Dendritic cell treated with granulocyte-macrophage colony-stimulating factor and Interleukin-4, amounts not matched to agents 40 ng/mL and 50 ng/mL, for 4 days (primary cell): ENCODE measurements at regions of chr10 and their contacts with region 1.

Region 1: DNA sequence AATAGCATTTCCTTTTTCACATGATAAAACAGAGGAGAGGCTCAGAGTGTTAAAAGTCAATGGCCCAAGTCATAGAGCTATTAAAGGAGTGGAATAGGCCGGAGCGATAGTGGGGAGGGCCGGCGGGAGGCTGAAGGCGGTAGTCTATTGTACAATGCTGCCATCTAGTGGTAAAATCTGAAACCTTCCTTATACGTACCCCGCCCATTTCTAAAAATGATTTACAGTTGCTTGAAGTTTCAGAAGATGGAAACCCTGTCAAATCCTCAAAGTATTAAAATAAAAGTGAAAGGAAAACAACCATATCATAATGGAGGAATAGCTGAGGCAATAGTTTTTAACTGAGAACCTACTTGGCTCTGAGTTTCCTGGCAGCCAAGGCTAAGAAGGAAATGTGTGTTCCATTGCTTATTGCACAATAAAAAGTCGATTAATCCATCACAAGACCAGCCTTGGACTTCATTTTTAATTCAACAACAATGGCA is 209.1 kb downstream of the CCSER2 start:
- H3K4me3 Mint-ChIP-seq: no peak overlapping the region
- H3K27ac Mint-ChIP-seq: no peak overlapping the region
- H3K4me1 Mint-ChIP-seq: peaks cover 15% of the 10 kb centered on the region
- H3K27me3 Mint-ChIP-seq: peaks cover 31% of the 10 kb centered on the region

Region 2: DNA sequence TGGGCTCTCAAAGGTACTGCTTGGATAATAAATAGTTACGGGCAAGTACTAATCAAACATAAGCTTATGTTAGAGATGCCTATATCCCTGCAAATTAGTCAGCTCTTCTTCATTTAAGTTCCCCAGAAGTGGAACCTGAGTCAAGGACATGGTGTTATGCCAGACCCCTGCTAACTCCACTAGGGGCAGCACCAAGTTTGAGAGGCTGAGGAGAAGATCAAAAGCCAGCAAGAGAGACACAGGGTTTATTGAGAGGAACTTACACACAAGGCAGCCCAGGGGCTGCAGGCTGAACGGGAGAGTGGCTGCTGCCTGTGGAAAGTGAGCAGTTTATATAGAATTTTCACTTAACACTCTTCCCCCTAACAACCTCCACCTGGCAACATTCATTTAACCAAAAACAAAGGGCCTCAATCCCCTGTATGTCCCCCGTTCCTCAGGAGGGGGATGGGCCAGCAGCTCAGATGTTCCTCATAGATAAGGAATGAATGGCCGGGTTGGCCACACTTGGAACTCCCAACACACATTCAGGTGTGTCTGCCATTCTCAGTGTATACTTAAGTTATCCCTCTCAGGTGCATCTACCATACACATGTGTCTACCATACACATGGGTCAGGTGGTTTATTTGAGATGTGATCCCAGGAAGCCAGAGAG is 460.8 kb before region 1 on chr10:
- intact Hi-C with region 1: no loop called
- H3K4me3 Mint-ChIP-seq: no peak overlapping the region
- H3K27ac Mint-ChIP-seq: no peak overlapping the region
- H3K4me1 Mint-ChIP-seq: no peaks in the 10 kb centered on the region
- H3K27me3 Mint-ChIP-seq: peaks cover under 1% of the 10 kb centered on the region

Region 3: DNA sequence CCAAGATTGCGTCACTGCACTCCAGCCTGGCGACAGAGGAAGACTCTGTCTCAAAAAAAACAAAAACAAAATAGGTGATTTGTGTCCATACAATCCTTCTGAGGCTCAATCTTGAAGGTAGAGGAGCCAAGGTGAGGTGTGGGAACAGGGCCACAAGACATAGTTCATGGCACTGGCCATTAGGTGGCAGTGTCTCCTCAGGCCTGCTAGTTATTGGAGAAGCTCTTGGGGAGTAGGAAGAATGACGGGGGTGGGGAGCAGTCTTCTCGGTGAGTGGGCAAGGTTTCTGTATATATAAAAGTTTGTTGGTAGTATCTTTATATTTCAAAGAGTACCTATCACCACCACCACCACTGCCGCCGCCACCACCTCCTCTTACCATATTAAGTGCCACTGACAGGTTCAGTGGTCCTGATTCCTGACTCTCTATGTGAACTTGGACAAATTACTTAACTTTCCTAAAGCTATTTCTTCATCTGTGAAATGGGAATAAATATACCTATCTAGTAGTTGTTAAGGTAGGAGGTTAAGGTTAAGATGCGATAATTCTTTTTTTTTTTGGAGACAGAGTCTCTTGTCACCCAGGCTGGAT is 185.1 kb before region 1 on chr10:
- intact Hi-C with region 1: loop called (anchors 2 kb)
- H3K4me3 Mint-ChIP-seq: no peak overlapping the region
- H3K27ac Mint-ChIP-seq: no peak overlapping the region
- H3K4me1 Mint-ChIP-seq: peaks cover 20% of the 10 kb centered on the region
- H3K27me3 Mint-ChIP-seq: no peaks in the 10 kb centered on the region

Region 4: GRCh38 chr10:84375011-84375410 is 162.5 kb before region 1 on chr10:
- intact Hi-C with region 1: loop called (anchors 1 kb)
- H3K4me3 Mint-ChIP-seq: no peak overlapping the region
- H3K27ac Mint-ChIP-seq: no peak overlapping the region
- H3K4me1 Mint-ChIP-seq: peaks cover 6% of the 10 kb centered on the region
- H3K27me3 Mint-ChIP-seq: no peaks in the 10 kb centered on the region